ENCODE measurements at regions of chr5 and their contacts with region 1.

Region 1: GRCh38 chr5:134145779-134146581 is 30.8 kb downstream of the SKP1 start:
- DNase-seq: peak; percentile 73 to 91 (median 84)
- ATAC-seq: peak; percentile 72
- H3K4me3 ChIP-seq: no peak overlapping the region
- H3K4me3 Mint-ChIP-seq: no peak overlapping the region
- H3K27ac ChIP-seq: peak overlapping the region in 1 of 2 experiments; percentile 37
- H3K27ac Mint-ChIP-seq: peak overlapping the region; percentile 83
- H3K4me1 ChIP-seq: peaks cover 22% of the 10 kb centered on the region
- H3K4me1 Mint-ChIP-seq: peaks cover 69% of the 10 kb centered on the region
- H3K27me3 ChIP-seq: no peaks in the 10 kb centered on the region
- H3K27me3 Mint-ChIP-seq: no peaks in the 10 kb centered on the region
- CTCF ChIP-seq: peak; percentile 86

Region 2: DNA sequence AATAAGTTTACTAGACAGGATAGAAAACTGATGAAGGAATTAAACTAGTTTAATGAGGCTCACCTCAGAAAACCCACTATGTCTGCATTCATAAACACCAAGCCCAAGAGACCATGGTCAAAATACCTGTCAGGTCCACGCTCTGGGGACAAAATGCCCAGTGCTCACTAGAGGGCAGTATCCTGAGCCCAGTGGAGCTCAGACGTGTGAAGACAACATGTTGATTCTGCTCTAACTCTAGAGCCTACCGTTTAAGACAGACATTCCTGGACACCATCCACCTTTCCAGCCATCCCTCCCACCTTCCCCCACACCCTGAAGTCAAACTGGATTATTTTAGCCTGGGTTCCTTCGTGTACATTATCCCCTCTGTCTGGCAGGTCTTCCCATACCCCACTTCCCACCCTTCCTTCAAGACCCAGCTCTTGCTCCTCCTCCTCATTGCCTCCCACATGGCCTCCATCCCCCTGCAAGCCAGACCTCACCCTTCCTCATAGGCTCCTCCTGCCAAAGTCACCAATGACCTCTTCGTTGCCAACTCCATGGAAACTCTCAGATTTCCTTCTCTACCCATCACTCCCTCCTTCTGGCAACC is 391.3 kb before region 1 on chr5:
- CTCF ChIA-PET with region 1: no interaction called
- POLR2A ChIA-PET with region 1: no interaction called
- intact Hi-C with region 1: no loop called
- DNase-seq: peak in 3 of 9 experiments; percentile 10 to 43 (median 30)
- ATAC-seq: no peak
- H3K4me3 ChIP-seq: no peak overlapping the region
- H3K4me3 Mint-ChIP-seq: no peak overlapping the region
- H3K27ac ChIP-seq: no peak overlapping the region
- H3K27ac Mint-ChIP-seq: no peak overlapping the region
- H3K4me1 ChIP-seq: no peaks in the 10 kb centered on the region
- H3K4me1 Mint-ChIP-seq: no peaks in the 10 kb centered on the region
- H3K27me3 ChIP-seq: no peaks in the 10 kb centered on the region
- H3K27me3 Mint-ChIP-seq: peaks cover 15% of the 10 kb centered on the region
- CTCF ChIP-seq: peak; percentile 45

Region 3: DNA sequence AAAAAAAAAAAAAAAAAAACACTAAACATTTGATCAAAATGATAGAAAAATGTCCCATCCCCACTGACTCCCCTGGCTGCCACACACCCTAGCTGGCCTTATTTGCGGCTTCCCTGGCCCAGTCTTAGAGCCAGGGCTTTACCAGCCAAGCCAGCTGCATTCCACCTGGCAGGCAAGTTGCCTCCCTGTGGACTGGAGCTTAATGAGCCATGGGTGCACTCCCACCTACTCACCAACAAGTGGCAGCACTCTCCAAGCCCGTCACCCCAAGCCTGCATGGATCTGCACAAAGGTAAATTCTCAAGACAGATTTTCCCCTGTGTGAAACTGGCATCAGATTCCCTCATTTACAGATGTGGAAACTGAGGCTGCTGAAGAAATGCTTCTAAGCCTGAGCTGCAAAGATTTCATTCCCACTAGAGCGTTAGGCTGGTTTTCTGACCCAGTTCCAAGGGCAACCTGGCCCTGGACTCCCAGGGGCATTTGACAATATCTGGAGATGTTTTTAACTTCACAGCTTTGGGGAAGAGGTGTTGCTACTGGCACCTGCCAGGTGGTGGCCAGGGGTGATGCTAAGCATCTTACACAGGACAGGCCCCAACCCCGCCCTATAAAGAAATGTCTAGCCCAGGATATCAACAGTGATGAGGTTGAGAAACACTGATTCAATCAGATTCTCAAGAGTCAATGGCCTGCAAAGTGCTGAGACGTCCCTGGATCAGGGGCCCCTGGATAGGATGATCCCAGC is 119.3 kb before region 1 on chr5:
- CTCF ChIA-PET with region 1: interaction called, 773 read pairs
- POLR2A ChIA-PET with region 1: interaction called, 14 read pairs
- intact Hi-C with region 1: loop called in 1 of 2 experiments (anchors 1 kb)
- DNase-seq: peak in 8 of 9 experiments; percentile 15 to 76 (median 60)
- ATAC-seq: peak; percentile 100
- H3K4me3 ChIP-seq: no peak overlapping the region
- H3K4me3 Mint-ChIP-seq: no peak overlapping the region
- H3K27ac ChIP-seq: no peak overlapping the region
- H3K27ac Mint-ChIP-seq: no peak overlapping the region
- H3K4me1 ChIP-seq: no peaks in the 10 kb centered on the region
- H3K4me1 Mint-ChIP-seq: peaks cover 4% of the 10 kb centered on the region
- H3K27me3 ChIP-seq: no peaks in the 10 kb centered on the region
- H3K27me3 Mint-ChIP-seq: peaks cover 2% of the 10 kb centered on the region
- CTCF ChIP-seq: peak; percentile 58

Region 4: DNA sequence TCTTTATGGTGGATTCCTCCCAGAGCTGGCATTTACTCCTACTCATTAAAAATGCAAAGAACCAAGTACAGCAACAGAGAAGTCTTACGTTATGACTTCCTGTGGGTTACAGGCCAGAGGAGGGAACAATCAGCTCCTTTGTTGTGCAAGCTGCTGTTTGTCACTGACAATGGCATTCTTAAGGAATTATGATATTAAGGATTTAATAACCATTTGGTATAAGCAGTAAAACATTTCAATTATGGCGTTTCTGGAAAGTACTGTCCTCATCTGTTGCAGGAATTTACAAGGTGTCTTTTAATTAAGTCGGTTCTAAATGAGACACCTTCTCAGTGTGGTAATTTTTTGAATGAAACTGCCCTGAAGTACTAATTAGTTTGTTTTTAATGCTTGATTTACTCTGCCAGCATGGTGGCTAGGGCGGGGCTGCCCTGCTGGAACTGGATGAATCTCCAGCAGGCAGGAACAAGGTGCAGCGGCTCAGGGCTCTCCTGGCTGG is 92.1 kb before region 1 on chr5:
- CTCF ChIA-PET with region 1: interaction called, 773 read pairs
- POLR2A ChIA-PET with region 1: interaction called, 8 read pairs
- intact Hi-C with region 1: no loop called
- DNase-seq: peak in 1 of 9 experiments; percentile 56
- ATAC-seq: peak; percentile 82
- H3K4me3 ChIP-seq: no peak overlapping the region
- H3K4me3 Mint-ChIP-seq: peak overlapping the region; percentile 44
- H3K27ac ChIP-seq: no peak overlapping the region
- H3K27ac Mint-ChIP-seq: peak overlapping the region; percentile 87
- H3K4me1 ChIP-seq: peaks cover 49% of the 10 kb centered on the region
- H3K4me1 Mint-ChIP-seq: peaks cover 52% of the 10 kb centered on the region
- H3K27me3 ChIP-seq: no peaks in the 10 kb centered on the region
- H3K27me3 Mint-ChIP-seq: no peaks in the 10 kb centered on the region
- CTCF ChIP-seq: no peak

Region 5: GRCh38 chr5:134124289-134125038 is 21.5 kb before region 1 on chr5:
- CTCF ChIA-PET with region 1: no interaction called
- POLR2A ChIA-PET with region 1: no interaction called
- intact Hi-C with region 1: loop called in 1 of 2 experiments (anchors 2 kb)
- DNase-seq: peak in 5 of 9 experiments; percentile 67 to 85 (median 71)
- ATAC-seq: peak; percentile 28
- H3K4me3 ChIP-seq: peak overlapping the region; percentile 40 to 52
- H3K4me3 Mint-ChIP-seq: peak overlapping the region; percentile 95
- H3K27ac ChIP-seq: peak overlapping the region; percentile 64 to 83
- H3K27ac Mint-ChIP-seq: peak overlapping the region; percentile 96
- H3K4me1 ChIP-seq: peaks cover 91% of the 10 kb centered on the region
- H3K4me1 Mint-ChIP-seq: peaks cover 95% of the 10 kb centered on the region
- H3K27me3 ChIP-seq: no peaks in the 10 kb centered on the region
- H3K27me3 Mint-ChIP-seq: no peaks in the 10 kb centered on the region
- CTCF ChIP-seq: no peak

Region 6: DNA sequence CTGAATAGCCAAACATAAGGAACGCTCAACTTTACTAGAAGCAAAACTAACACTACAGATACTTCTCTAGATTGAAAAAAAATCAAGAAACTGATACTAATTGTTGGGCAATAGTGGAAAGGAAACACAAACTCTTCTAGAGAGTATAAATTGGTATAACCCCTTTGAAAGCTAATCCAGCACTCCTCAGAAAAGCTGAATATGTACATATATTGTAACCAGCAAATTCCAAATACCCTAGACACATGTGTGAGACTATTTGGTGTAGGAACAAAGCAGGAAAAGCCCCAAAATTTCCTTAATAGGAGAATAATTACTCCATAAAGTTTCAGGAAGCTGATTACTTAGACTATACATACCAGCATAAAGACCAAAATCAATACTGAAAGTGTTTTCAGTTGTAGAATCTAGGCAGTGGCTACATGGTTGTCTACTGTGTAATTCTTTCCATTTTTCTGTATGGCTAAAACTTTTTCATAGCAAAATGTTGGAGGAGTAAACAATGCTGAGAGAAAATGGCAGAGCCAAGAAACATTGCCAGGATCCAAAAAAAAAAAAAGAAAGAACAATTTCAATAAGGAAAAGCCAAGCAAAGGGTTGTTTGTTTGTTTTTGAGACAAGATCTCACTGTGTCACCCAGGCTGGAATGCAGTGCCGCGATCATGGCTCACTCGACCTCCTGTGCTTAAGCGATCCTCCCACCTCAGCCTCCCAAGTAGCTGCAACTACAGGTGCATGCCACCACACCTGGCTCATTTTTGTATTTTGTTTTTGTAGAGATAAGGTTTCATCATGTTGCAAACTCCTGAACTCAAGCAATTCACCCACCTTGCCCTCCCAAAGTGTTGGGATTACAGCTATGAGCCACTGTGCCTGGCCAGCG is 15.8 kb after region 1 on chr5:
- CTCF ChIA-PET with region 1: interaction called, 15 read pairs
- POLR2A ChIA-PET with region 1: interaction called, 34 read pairs
- intact Hi-C with region 1: no loop called
- DNase-seq: no peak
- ATAC-seq: no peak
- H3K4me3 ChIP-seq: no peak overlapping the region
- H3K4me3 Mint-ChIP-seq: no peak overlapping the region
- H3K27ac ChIP-seq: no peak overlapping the region
- H3K27ac Mint-ChIP-seq: no peak overlapping the region
- H3K4me1 ChIP-seq: peaks cover 9% of the 10 kb centered on the region
- H3K4me1 Mint-ChIP-seq: peaks cover 47% of the 10 kb centered on the region
- H3K27me3 ChIP-seq: no peaks in the 10 kb centered on the region
- H3K27me3 Mint-ChIP-seq: no peaks in the 10 kb centered on the region
- CTCF ChIP-seq: no peak

Region 7: DNA sequence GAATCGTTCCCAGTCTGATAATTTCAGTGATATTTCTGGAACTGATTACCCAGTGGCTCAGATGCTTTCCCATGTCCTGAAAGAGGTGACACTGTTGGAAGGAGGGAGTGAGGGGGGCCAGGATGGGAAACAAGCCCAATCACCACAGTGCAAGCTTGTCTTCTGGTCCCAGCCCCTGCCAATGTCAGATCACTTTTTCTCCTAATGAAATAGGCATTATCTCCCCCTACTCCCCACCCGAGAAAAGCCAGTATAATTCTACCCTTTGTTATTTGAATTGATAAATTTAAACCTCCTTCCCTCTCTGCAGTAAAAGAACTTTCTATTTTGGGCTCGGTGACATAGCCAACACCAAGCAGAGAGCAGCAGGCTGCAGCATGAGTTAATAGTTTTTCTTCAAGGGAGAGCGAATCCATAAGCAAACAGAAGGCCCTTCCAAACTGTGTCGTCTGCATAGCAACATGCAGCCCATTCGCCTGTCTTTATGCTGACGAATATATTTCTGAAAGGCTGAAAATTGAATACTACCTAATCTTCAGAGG is 94.5 kb after region 1 on chr5:
- CTCF ChIA-PET with region 1: no interaction called
- POLR2A ChIA-PET with region 1: no interaction called
- intact Hi-C with region 1: no loop called
- DNase-seq: no peak
- ATAC-seq: no peak
- H3K4me3 ChIP-seq: no peak overlapping the region
- H3K4me3 Mint-ChIP-seq: no peak overlapping the region
- H3K27ac ChIP-seq: no peak overlapping the region
- H3K27ac Mint-ChIP-seq: no peak overlapping the region
- H3K4me1 ChIP-seq: no peaks in the 10 kb centered on the region
- H3K4me1 Mint-ChIP-seq: no peaks in the 10 kb centered on the region
- H3K27me3 ChIP-seq: no peaks in the 10 kb centered on the region
- H3K27me3 Mint-ChIP-seq: peaks cover 2% of the 10 kb centered on the region
- CTCF ChIP-seq: no peak

Measured in CD8-positive, alpha-beta T cell (primary cell).